IMR-90 (cell line): ENCODE measurements at regions of chr7 and their contacts with region 1.

Region 1: GRCh38 chr7:12686894-12687717 is at the start of gene ARL4A:
- DNase-seq: peak; percentile 98
- ATAC-seq: peak; percentile 95
- H3K4me3 ChIP-seq: peak within 1 kb of the TSS; percentile 77
- H3K27ac ChIP-seq: peak within 1 kb of the TSS; percentile 67
- H3K4me1 ChIP-seq: no peaks in the 10 kb centered on the region
- H3K27me3 ChIP-seq: no peaks in the 10 kb centered on the region
- CTCF ChIP-seq: peak; percentile 63
- POLR2A ChIP-seq: peak; percentile 94
- RAD21 ChIP-seq: peak; percentile 66
- total RNA-seq, gene ARL4A: 22.4 and 48.0 TPM in 2 replicates

Region 2: DNA sequence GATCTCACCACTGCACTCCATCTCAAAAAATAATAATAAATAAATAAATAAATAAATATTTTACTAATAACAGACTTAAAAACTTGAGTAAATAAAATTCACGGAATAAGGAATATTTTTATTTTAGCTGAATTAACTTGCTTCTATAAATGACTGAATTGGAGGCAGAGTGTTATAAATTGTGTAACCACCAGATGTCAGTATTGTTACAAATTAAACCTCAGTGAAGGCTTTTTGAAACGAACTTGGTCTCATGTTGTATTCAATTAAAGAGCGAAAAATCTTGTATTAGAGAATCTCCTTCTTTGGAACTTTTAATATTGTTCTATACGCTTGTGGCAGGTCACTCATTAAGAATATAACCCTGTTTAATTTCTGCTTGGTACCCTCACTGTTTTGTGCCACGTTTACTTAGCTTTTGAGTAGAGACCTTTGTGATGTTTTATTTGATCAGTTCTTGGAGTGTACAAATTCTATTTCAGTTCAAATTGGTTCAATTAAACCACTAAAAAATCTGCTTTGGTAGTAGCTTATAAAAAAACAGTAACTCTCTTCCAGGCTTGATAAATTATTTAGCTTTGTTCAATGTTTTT is 162.2 kb before region 1 on chr7:
- CTCF ChIA-PET with region 1: no interaction called
- POLR2A ChIA-PET with region 1: no interaction called
- dilution Hi-C with region 1: no loop called
- in situ Hi-C with region 1: no loop called
- intact Hi-C with region 1: loop called (anchors 5 kb)
- DNase-seq: peak; percentile 69
- ATAC-seq: peak; percentile 67; the same call in 1 of the 2 replicates
- H3K4me3 ChIP-seq: no peak overlapping the region
- H3K27ac ChIP-seq: no peak overlapping the region
- H3K4me1 ChIP-seq: no peaks in the 10 kb centered on the region
- H3K27me3 ChIP-seq: peaks cover 1% of the 10 kb centered on the region; the same call in 1 of the 2 replicates
- CTCF ChIP-seq: peak; percentile 76
- POLR2A ChIP-seq: no peak
- RAD21 ChIP-seq: peak; percentile 66

Region 3: DNA sequence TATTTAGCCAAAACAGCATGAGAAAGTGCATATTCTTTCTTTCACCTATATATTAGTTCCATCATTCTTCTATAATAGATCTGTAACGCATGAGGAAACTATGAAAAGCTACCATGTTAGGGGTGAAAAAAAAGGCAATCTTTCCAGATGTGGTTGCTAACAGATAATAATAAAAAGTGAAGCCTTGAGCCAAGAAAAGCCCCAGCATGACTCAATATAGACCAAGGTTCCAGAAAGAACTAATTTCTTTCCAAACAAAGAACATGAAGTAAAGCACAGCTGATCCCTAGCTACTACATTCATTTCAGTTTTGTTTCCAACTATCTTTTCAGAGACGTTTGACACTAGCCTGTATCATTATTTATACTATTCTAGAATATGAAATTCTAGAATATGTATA is 16.8 kb after region 1 on chr7:
- CTCF ChIA-PET with region 1: no interaction called
- POLR2A ChIA-PET with region 1: no interaction called
- dilution Hi-C with region 1: no loop called
- in situ Hi-C with region 1: no loop called
- intact Hi-C with region 1: loop called (anchors 2 kb)
- DNase-seq: peak; percentile 33
- ATAC-seq: no peak
- H3K4me3 ChIP-seq: no peak overlapping the region
- H3K27ac ChIP-seq: no peak overlapping the region
- H3K4me1 ChIP-seq: peaks cover 5% of the 10 kb centered on the region
- H3K27me3 ChIP-seq: no peaks in the 10 kb centered on the region
- CTCF ChIP-seq: no peak
- POLR2A ChIP-seq: no peak
- RAD21 ChIP-seq: no peak

Region 4: DNA sequence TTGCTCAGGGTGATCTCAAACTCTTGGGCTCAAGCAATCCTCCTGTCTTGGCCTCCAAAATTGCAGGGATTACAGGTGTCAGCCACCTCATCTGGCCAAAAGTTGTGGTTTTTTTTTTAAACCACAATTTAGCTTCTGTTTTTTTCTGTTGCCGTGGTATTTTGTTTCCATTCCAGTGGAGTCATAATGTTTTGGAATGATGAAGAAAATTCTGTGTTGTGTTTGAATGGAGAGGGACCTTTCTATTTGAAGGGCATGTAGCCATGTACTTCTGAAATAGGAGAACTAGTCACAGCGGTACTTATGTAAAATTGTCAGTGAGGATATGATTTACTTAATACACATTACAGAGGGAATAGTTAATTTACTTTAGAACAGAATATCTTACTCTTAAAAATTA is 201.6 kb after region 1 on chr7:
- CTCF ChIA-PET with region 1: no interaction called
- POLR2A ChIA-PET with region 1: no interaction called
- dilution Hi-C with region 1: no loop called
- in situ Hi-C with region 1: no loop called
- intact Hi-C with region 1: loop called (anchors 5 kb)
- DNase-seq: peak; percentile 66
- ATAC-seq: peak; percentile 19; the same call in 1 of the 2 replicates
- H3K4me3 ChIP-seq: no peak overlapping the region
- H3K27ac ChIP-seq: no peak overlapping the region
- H3K4me1 ChIP-seq: peaks cover 6% of the 10 kb centered on the region; the same call in 1 of the 2 replicates
- H3K27me3 ChIP-seq: no peaks in the 10 kb centered on the region
- CTCF ChIP-seq: no peak
- POLR2A ChIP-seq: no peak
- RAD21 ChIP-seq: no peak

Region 5: GRCh38 chr7:13117103-13117502 is 430.0 kb after region 1 on chr7:
- CTCF ChIA-PET with region 1: interaction called, 27 read pairs
- POLR2A ChIA-PET with region 1: no interaction called
- dilution Hi-C with region 1: no loop called
- in situ Hi-C with region 1: loop called (anchors 25 kb)
- intact Hi-C with region 1: loop called (anchors 1 kb)
- DNase-seq: peak; percentile 37
- ATAC-seq: peak; percentile 70
- H3K4me3 ChIP-seq: no peak overlapping the region
- H3K27ac ChIP-seq: no peak overlapping the region
- H3K4me1 ChIP-seq: peaks cover 3% of the 10 kb centered on the region
- H3K27me3 ChIP-seq: no peaks in the 10 kb centered on the region
- CTCF ChIP-seq: peak; percentile 68
- POLR2A ChIP-seq: no peak
- RAD21 ChIP-seq: peak; percentile 77

Region 6: GRCh38 chr7:13262929-13263530 is 575.9 kb after region 1 on chr7:
- CTCF ChIA-PET with region 1: interaction called, 7 read pairs
- POLR2A ChIA-PET with region 1: no interaction called
- dilution Hi-C with region 1: no loop called
- in situ Hi-C with region 1: loop called (anchors 5 kb)
- intact Hi-C with region 1: loop called (anchors 1 kb)
- DNase-seq: peak; percentile 52
- ATAC-seq: peak; percentile 63; the same call in 1 of the 2 replicates
- H3K4me3 ChIP-seq: no peak overlapping the region
- H3K27ac ChIP-seq: no peak overlapping the region
- H3K4me1 ChIP-seq: no peaks in the 10 kb centered on the region
- H3K27me3 ChIP-seq: no peaks in the 10 kb centered on the region
- CTCF ChIP-seq: peak; percentile 87
- POLR2A ChIP-seq: no peak
- RAD21 ChIP-seq: peak; percentile 90